HepG2 (cell line): ENCODE measurements at regions of chr20 and their contacts with region 1.

Region 1: GRCh38 chr20:38418509-38419204 is 16.5 kb downstream of the SNHG17 start:
- DNase-seq: no peak
- ATAC-seq: peak; percentile 7
- H3K4me3 ChIP-seq: no peak overlapping the region
- H3K27ac ChIP-seq: no peak overlapping the region
- H3K4me1 ChIP-seq: no peaks in the 10 kb centered on the region
- H3K27me3 ChIP-seq: no peaks in the 10 kb centered on the region
- CTCF ChIP-seq: no peak
- EP300 ChIP-seq: no peak
- POLR2A ChIP-seq: peak in 1 of 2 experiments; percentile 56; a peak in 3 of 4 replicates
- RAD21 ChIP-seq: no peak

Region 2: GRCh38 chr20:36585463-36586108 is 1833.1 kb before region 1 on chr20:
- CTCF ChIA-PET with region 1: no interaction called
- POLR2A ChIA-PET with region 1: no interaction called
- in situ Hi-C with region 1: no loop called
- intact Hi-C with region 1: loop called (anchors 5 kb)
- DNase-seq: no peak
- ATAC-seq: peak; percentile 6; the same call in 1 of the 3 replicates
- H3K4me3 ChIP-seq: no peak overlapping the region
- H3K27ac ChIP-seq: no peak overlapping the region
- H3K4me1 ChIP-seq: no peaks in the 10 kb centered on the region
- H3K27me3 ChIP-seq: no peaks in the 10 kb centered on the region
- CTCF ChIP-seq: no peak
- EP300 ChIP-seq: no peak
- POLR2A ChIP-seq: no peak
- RAD21 ChIP-seq: no peak